ENCODE measurements at regions of chr19 and their contacts with region 1.

Region 1: DNA sequence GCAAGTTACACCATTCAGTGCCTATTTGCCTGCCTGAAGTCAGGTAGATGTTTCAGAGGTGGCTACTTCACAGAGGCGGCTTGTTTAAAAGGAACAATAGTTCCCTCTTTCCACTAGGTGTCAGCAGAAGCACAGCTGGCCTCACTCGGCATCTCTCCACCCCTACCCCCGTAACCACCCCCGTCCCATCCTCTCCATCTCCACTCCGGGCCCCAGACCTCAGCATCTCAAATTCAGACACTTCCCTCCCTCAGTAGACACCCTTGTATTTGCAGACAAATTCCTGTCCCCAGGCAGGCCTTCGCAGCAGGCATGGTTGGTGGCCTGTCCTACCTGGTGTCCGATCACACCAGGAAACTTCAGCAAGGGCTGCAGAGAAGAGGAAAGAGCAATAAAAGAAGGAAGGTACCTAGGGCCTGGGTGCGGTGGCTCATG is 9.1 kb upstream of the DPP9 start:
- DNase-seq: no peak
- ATAC-seq: peak; percentile 97
- H3K4me3 ChIP-seq: no peak overlapping the region
- H3K27ac ChIP-seq: no peak overlapping the region
- H3K4me1 ChIP-seq: no peaks in the 10 kb centered on the region
- H3K27me3 ChIP-seq: no peaks in the 10 kb centered on the region
- CTCF ChIP-seq: peak; percentile 67 to 89 (median 79)
- EP300 ChIP-seq: no peak
- POLR2A ChIP-seq: no peak
- RAD21 ChIP-seq: peak; percentile 75

Region 2: GRCh38 chr19:4701557-4701956 is 31.1 kb before region 1 on chr19:
- CTCF ChIA-PET with region 1: no interaction called
- POLR2A ChIA-PET with region 1: no interaction called
- RAD21 ChIA-PET with region 1: no interaction called
- SMC1A ChIA-PET with region 1: no interaction called
- in situ Hi-C with region 1: no loop called
- intact Hi-C with region 1: no loop called
- DNase-seq: no peak
- ATAC-seq: no peak
- H3K4me3 ChIP-seq: no peak overlapping the region
- H3K27ac ChIP-seq: no peak overlapping the region
- H3K4me1 ChIP-seq: no peaks in the 10 kb centered on the region
- H3K27me3 ChIP-seq: no peaks in the 10 kb centered on the region
- CTCF ChIP-seq: no peak
- EP300 ChIP-seq: no peak
- POLR2A ChIP-seq: no peak
- RAD21 ChIP-seq: no peak

Region 3: GRCh38 chr19:4713384-4713951 is 19.2 kb before region 1 on chr19:
- CTCF ChIA-PET with region 1: no interaction called
- POLR2A ChIA-PET with region 1: no interaction called
- RAD21 ChIA-PET with region 1: no interaction called
- SMC1A ChIA-PET with region 1: no interaction called
- in situ Hi-C with region 1: no loop called
- intact Hi-C with region 1: no loop called
- DNase-seq: no peak
- ATAC-seq: no peak
- H3K4me3 ChIP-seq: no peak overlapping the region
- H3K27ac ChIP-seq: no peak overlapping the region
- H3K4me1 ChIP-seq: peaks cover 17% of the 10 kb centered on the region
- H3K27me3 ChIP-seq: no peaks in the 10 kb centered on the region
- CTCF ChIP-seq: no peak
- EP300 ChIP-seq: no peak
- POLR2A ChIP-seq: no peak; the same call in 1 of the 2 replicates
- RAD21 ChIP-seq: no peak

Region 4: GRCh38 chr19:4773047-4773640 is 40.4 kb after region 1 on chr19:
- CTCF ChIA-PET with region 1: interaction called, 4 read pairs
- POLR2A ChIA-PET with region 1: interaction called, 5 read pairs
- RAD21 ChIA-PET with region 1: no interaction called
- SMC1A ChIA-PET with region 1: interaction called, 4 read pairs
- in situ Hi-C with region 1: no loop called
- intact Hi-C with region 1: loop called (anchors 5 kb)
- DNase-seq: peak; percentile 25
- ATAC-seq: peak; percentile 94
- H3K4me3 ChIP-seq: no peak overlapping the region
- H3K27ac ChIP-seq: no peak overlapping the region
- H3K4me1 ChIP-seq: no peaks in the 10 kb centered on the region
- H3K27me3 ChIP-seq: no peaks in the 10 kb centered on the region; a peak in 2 of 4 replicates
- CTCF ChIP-seq: no peak
- EP300 ChIP-seq: no peak
- POLR2A ChIP-seq: no peak
- RAD21 ChIP-seq: no peak

Region 5: GRCh38 chr19:4781801-4782200 is 49.1 kb after region 1 on chr19:
- CTCF ChIA-PET with region 1: interaction called, 17 read pairs
- POLR2A ChIA-PET with region 1: interaction called, 5 read pairs
- RAD21 ChIA-PET with region 1: interaction called, 4 read pairs
- SMC1A ChIA-PET with region 1: interaction called, 14 read pairs
- in situ Hi-C with region 1: no loop called
- intact Hi-C with region 1: no loop called
- DNase-seq: no peak
- ATAC-seq: no peak
- H3K4me3 ChIP-seq: no peak overlapping the region
- H3K27ac ChIP-seq: no peak overlapping the region
- H3K4me1 ChIP-seq: no peaks in the 10 kb centered on the region
- H3K27me3 ChIP-seq: no peaks in the 10 kb centered on the region
- CTCF ChIP-seq: no peak
- EP300 ChIP-seq: no peak
- POLR2A ChIP-seq: no peak
- RAD21 ChIP-seq: no peak

Region 6: GRCh38 chr19:4803736-4804695 is 71.3 kb after region 1 on chr19:
- CTCF ChIA-PET with region 1: interaction called, 12 read pairs
- POLR2A ChIA-PET with region 1: no interaction called
- RAD21 ChIA-PET with region 1: interaction called, 9 read pairs
- SMC1A ChIA-PET with region 1: interaction called, 7 read pairs
- in situ Hi-C with region 1: no loop called
- intact Hi-C with region 1: loop called (anchors 1 kb)
- DNase-seq: no peak
- ATAC-seq: peak; percentile 95
- H3K4me3 ChIP-seq: no peak overlapping the region
- H3K27ac ChIP-seq: no peak overlapping the region
- H3K4me1 ChIP-seq: peaks cover 6% of the 10 kb centered on the region
- H3K27me3 ChIP-seq: no peaks in the 10 kb centered on the region
- CTCF ChIP-seq: peak; percentile 86 to 93 (median 90)
- EP300 ChIP-seq: no peak
- POLR2A ChIP-seq: no peak
- RAD21 ChIP-seq: peak; percentile 66

Measured in GM12878 (cell line).